Aorta (tissue), 5 donors: ENCODE measurements at regions of chr1 and their contacts with region 1.

Region 1: DNA sequence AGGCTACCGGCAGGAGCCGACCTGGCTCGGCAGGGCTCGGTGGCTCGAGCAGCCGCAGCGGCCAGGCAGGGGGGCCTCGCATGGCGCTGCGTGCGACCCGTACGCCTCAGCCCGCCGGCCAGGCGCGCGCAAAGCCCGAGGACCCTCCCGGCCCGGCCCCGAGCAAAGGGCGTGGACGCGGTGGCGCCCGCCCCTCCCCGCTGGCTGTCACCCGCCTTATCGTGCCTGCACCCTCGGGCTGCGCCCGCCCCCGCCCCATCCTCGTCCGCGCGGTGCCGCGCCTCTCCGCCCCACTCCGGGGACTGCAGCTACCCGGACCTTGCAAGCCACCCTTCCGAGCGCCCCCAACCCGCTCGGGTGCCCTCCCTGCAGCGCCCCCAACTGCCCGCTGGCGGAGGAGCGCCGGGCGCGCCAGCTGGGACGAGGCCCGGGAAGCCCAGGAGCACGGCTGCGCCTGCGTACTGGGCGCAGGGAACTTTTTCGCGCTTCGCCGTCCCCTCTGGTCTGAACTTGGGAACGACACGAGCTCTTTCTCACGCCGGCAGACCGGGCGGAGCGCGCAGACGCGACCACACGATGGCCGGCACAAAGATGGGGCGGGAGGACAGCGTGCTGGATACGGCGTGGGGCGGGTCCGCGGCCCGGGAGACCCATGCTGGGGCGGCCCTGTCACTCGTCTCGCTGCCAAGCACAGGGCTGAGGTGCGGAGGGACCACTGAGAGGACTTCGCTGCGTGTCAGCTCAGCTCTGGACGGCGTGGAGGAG is at the start of gene ABCB10:
- DNase-seq: peak; percentile 98 to 99
- ATAC-seq: peak; percentile 97
- H3K4me3 ChIP-seq: peak within 1 kb of the TSS; percentile 96 to 98
- H3K27ac ChIP-seq: peak within 1 kb of the TSS; percentile 79 to 89
- H3K4me1 ChIP-seq: peaks cover 0 to 6% of the 10 kb centered on the region in 2 donors
- H3K27me3 ChIP-seq: no peaks in the 10 kb centered on the region
- total RNA-seq, gene ABCB10: 19.9 to 24.2 TPM

Region 2: GRCh38 chr1:229582011-229582694 is 23.4 kb after region 1 on chr1:
- intact Hi-C with region 1: no loop called
- DNase-seq: peak; percentile 83 to 87
- ATAC-seq: peak; percentile 69
- H3K4me3 ChIP-seq: no peak overlapping the region
- H3K27ac ChIP-seq: peak overlapping the region in 1 of 2 donors; percentile 39
- H3K4me1 ChIP-seq: peaks cover 0 to 3% of the 10 kb centered on the region in 2 donors
- H3K27me3 ChIP-seq: no peaks in the 10 kb centered on the region

Region 3: DNA sequence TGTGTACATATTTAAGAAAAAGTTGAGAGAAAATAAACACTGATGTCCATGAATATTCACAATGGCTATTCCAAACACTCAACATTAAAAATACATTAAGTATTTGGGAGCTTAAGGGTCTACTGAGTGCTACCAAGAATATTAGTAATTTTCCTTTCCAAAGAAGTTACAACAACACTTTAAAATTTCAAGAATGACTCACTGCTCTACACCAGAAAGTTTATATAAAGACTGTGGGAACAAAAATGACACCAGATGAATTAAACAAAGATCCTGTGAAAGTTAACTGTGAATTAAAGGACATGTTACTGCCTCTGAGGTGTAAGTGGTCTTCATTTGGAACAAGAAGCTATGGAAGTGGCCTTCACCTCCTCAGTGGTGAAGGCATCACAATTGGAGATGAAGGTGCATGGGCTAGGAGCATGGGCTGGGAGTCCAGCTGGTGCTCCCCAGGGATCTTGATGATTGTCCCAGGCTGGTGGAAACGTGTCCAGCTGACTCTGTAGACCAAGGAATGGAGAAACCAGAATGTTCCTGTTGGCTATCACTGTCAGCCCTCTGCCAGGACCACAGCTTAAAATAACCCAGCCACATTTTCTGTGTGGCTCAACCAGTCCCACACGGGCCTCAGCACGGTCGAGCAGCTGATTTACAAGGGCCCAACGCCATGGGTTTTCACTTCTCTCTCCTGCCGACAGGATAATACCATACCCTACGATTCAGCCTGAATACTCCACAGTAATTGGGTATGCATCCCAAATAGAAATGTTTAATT is 38.4 kb after region 1 on chr1:
- intact Hi-C with region 1: loop called (anchors 2 kb)
- DNase-seq: peak; percentile 85 to 87
- ATAC-seq: peak; percentile 91
- H3K4me3 ChIP-seq: no peak overlapping the region
- H3K27ac ChIP-seq: peak overlapping the region; percentile 73 to 98
- H3K4me1 ChIP-seq: peaks cover 8 to 16% of the 10 kb centered on the region in 2 donors
- H3K27me3 ChIP-seq: no peaks in the 10 kb centered on the region

Region 4: GRCh38 chr1:229625915-229626831 is 67.4 kb after region 1 on chr1 and contains the starts of genes TAF5L and URB2:
- intact Hi-C with region 1: loop called (anchors 2 kb)
- DNase-seq: peak; percentile 92 to 95
- ATAC-seq: peak; percentile 97
- H3K4me3 ChIP-seq: peak within 1 kb of the TSS; percentile 80 to 100
- H3K27ac ChIP-seq: peak within 1 kb of the TSS; percentile 56 to 80
- H3K4me1 ChIP-seq: peaks cover 0 to 5% of the 10 kb centered on the region in 2 donors
- H3K27me3 ChIP-seq: no peaks in the 10 kb centered on the region
- total RNA-seq, gene TAF5L: 29.8 to 37.8 TPM
- total RNA-seq, gene URB2: 6.8 to 8.9 TPM

Region 5: DNA sequence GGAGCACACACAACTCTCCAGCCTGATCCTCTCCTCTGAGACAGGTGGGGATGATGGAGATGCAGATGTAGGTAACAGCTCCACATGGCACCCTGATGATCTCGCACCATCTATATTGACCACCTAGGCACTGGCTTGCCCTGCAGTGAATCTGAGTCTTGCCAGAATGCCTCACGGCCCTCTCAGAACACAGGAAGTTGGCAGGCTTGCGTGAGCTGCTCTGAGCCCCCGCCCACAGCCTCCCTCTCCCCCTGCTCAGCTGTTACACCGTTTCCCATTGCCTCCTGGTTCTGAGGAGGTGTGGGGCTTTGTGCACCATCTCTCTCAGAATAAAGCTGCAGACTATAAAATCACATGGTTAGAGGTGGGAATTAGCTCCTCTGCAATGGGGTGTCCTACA is 115.3 kb after region 1 on chr1:
- intact Hi-C with region 1: no loop called
- DNase-seq: no peak
- ATAC-seq: no peak
- H3K4me3 ChIP-seq: no peak overlapping the region
- H3K27ac ChIP-seq: no peak overlapping the region
- H3K4me1 ChIP-seq: peaks cover 0 to 2% of the 10 kb centered on the region in 2 donors
- H3K27me3 ChIP-seq: no peaks in the 10 kb centered on the region